IMR-90 (cell line): ENCODE measurements at regions of chr6 and their contacts with region 1.

Region 1: GRCh38 chr6:36678518-36679027 is at the start of gene CDKN1A:
- DNase-seq: peak; percentile 93
- ATAC-seq: peak; percentile 77
- H3K4me3 ChIP-seq: peak within 1 kb of the TSS; percentile 89
- H3K27ac ChIP-seq: peak within 1 kb of the TSS; percentile 88
- H3K4me1 ChIP-seq: peaks cover 22% of the 10 kb centered on the region
- H3K27me3 ChIP-seq: no peaks in the 10 kb centered on the region
- CTCF ChIP-seq: no peak; the same call in 1 of the 2 replicates
- POLR2A ChIP-seq: peak; percentile 99
- RAD21 ChIP-seq: no peak; the same call in 1 of the 2 replicates
- total RNA-seq, gene CDKN1A: 155 and 171 TPM in 2 replicates

Region 2: GRCh38 chr6:36423101-36423824 is 255.3 kb before region 1 on chr6:
- CTCF ChIA-PET with region 1: no interaction called
- POLR2A ChIA-PET with region 1: no interaction called
- dilution Hi-C with region 1: no loop called
- in situ Hi-C with region 1: no loop called
- intact Hi-C with region 1: loop called (anchors 5 kb)
- DNase-seq: peak; percentile 97
- ATAC-seq: peak; percentile 98
- H3K4me3 ChIP-seq: peak overlapping the region; percentile 66
- H3K27ac ChIP-seq: peak overlapping the region; percentile 55; the same call in 1 of the 2 replicates
- H3K4me1 ChIP-seq: peaks cover 2% of the 10 kb centered on the region
- H3K27me3 ChIP-seq: no peaks in the 10 kb centered on the region
- CTCF ChIP-seq: peak; percentile 75
- POLR2A ChIP-seq: peak; percentile 30; the same call in 1 of the 2 replicates
- RAD21 ChIP-seq: peak; percentile 79

Region 3: GRCh38 chr6:36623547-36624459 is 54.8 kb before region 1 on chr6:
- CTCF ChIA-PET with region 1: interaction called, 3 read pairs
- POLR2A ChIA-PET with region 1: interaction called, 4 read pairs
- dilution Hi-C with region 1: no loop called
- in situ Hi-C with region 1: loop called (anchors 5 kb)
- intact Hi-C with region 1: loop called (anchors 1 kb)
- DNase-seq: peak; percentile 77
- ATAC-seq: peak; percentile 67
- H3K4me3 ChIP-seq: no peak overlapping the region
- H3K27ac ChIP-seq: no peak overlapping the region
- H3K4me1 ChIP-seq: peaks cover 13% of the 10 kb centered on the region
- H3K27me3 ChIP-seq: no peaks in the 10 kb centered on the region
- CTCF ChIP-seq: peak; percentile 90
- POLR2A ChIP-seq: no peak
- RAD21 ChIP-seq: peak; percentile 90

Region 4: DNA sequence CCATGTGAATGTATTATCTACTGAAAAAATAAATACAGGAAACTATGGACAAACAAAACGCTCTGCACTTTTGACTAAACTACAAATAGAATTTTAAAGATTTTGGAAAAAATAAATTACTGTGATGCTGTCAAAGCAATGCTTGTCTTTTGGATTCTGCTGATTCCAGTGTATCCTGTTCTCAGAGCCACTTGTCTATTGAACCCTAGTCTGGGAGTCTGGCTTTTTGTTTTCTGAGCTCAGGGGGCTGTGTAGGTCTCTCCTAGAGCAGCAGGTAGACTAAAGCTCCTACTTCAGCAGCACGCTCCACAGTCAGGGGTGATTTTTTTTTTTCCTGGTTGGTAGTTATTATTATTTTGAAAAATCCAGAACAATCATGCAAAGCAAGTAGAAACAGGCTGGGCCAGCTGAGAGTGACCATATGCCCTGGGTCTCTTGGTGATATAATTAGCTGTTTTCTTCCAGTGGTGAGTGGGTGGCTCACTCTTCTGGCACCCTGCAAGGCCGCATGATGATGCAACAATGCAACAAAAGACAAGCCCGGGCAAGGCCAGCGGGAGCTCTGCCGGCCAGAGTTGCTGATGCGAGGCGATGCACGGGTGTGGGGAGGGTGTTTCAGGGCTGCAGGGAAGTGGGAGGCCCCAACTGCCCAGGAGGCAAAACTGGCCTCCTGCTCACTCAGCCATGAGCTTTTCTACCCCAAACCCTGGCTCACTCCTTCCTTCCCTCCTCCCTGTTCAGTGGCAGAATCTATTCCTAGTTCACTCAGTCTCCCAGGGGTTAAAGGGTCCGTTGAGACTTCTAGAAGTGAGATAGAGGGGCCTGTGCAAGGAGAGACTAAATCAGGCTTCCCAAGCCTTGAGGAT is 11.6 kb before region 1 on chr6:
- CTCF ChIA-PET with region 1: interaction called, 3 read pairs
- POLR2A ChIA-PET with region 1: interaction called, 26 read pairs
- dilution Hi-C with region 1: no loop called
- in situ Hi-C with region 1: no loop called
- intact Hi-C with region 1: no loop called
- DNase-seq: peak; percentile 96
- ATAC-seq: peak; percentile 96
- H3K4me3 ChIP-seq: no peak overlapping the region
- H3K27ac ChIP-seq: peak overlapping the region; percentile 95
- H3K4me1 ChIP-seq: peaks cover 13% of the 10 kb centered on the region
- H3K27me3 ChIP-seq: no peaks in the 10 kb centered on the region
- CTCF ChIP-seq: no peak
- POLR2A ChIP-seq: no peak; the same call in 1 of the 2 replicates
- RAD21 ChIP-seq: peak; percentile 27

Region 5: DNA sequence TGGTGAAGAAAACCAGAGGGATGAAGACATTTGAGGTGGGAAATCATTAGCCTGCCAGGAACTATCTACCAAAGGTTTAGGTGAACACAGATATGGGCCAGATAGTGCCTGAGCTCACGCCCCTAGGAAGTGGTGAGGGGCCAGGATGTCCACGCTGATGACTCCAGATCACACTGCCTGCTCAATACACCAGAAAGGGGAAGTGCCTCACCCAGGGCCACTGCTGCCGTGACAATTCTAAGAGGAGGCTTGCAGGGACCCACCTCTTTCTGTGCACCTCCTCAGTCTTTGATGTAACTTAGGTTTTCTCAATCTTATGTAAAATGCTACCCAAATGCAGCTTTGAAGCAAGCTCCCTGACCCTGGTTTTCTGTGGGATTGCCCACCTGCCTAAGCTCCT is 13.6 kb after region 1 on chr6:
- CTCF ChIA-PET with region 1: no interaction called
- POLR2A ChIA-PET with region 1: no interaction called
- dilution Hi-C with region 1: no loop called
- in situ Hi-C with region 1: no loop called
- intact Hi-C with region 1: no loop called
- DNase-seq: no peak
- ATAC-seq: no peak
- H3K4me3 ChIP-seq: no peak overlapping the region
- H3K27ac ChIP-seq: no peak overlapping the region
- H3K4me1 ChIP-seq: no peaks in the 10 kb centered on the region
- H3K27me3 ChIP-seq: peaks cover under 1% of the 10 kb centered on the region
- CTCF ChIP-seq: no peak
- POLR2A ChIP-seq: no peak
- RAD21 ChIP-seq: no peak

Region 6: GRCh38 chr6:36759148-36759759 is 80.7 kb after region 1 on chr6:
- CTCF ChIA-PET with region 1: interaction called, 3 read pairs
- POLR2A ChIA-PET with region 1: interaction called, 7 read pairs
- dilution Hi-C with region 1: no loop called
- in situ Hi-C with region 1: no loop called
- intact Hi-C with region 1: loop called (anchors 2 kb)
- DNase-seq: peak; percentile 68
- ATAC-seq: peak; percentile 99
- H3K4me3 ChIP-seq: no peak overlapping the region
- H3K27ac ChIP-seq: no peak overlapping the region
- H3K4me1 ChIP-seq: no peaks in the 10 kb centered on the region
- H3K27me3 ChIP-seq: peaks cover 18% of the 10 kb centered on the region
- CTCF ChIP-seq: peak; percentile 98
- POLR2A ChIP-seq: no peak
- RAD21 ChIP-seq: peak; percentile 95

Region 7: GRCh38 chr6:36997811-36998722 is 319.5 kb after region 1 on chr6:
- CTCF ChIA-PET with region 1: no interaction called
- POLR2A ChIA-PET with region 1: no interaction called
- dilution Hi-C with region 1: no loop called
- in situ Hi-C with region 1: no loop called
- intact Hi-C with region 1: no loop called
- DNase-seq: no peak
- ATAC-seq: no peak
- H3K4me3 ChIP-seq: no peak overlapping the region
- H3K27ac ChIP-seq: no peak overlapping the region
- H3K4me1 ChIP-seq: no peaks in the 10 kb centered on the region
- H3K27me3 ChIP-seq: peaks cover 44% of the 10 kb centered on the region
- CTCF ChIP-seq: no peak
- POLR2A ChIP-seq: no peak
- RAD21 ChIP-seq: no peak